Heart right ventricle (tissue), 16 donors: ENCODE measurements at regions of chr12 and their contacts with region 1.

Region 1: GRCh38 chr12:11067514-11067913 is 5.4 kb upstream of the TAS2R46 start:
- DNase-seq: peak in 1 of 2 donors; percentile 68
- ATAC-seq: peak in 6 of 8 donors; percentile 41 to 88 (median 82)
- H3K4me3 ChIP-seq: no peak overlapping the region
- H3K27ac ChIP-seq: no peak overlapping the region
- H3K4me1 ChIP-seq: peaks cover 0 to 10% (median 0%) of the 10 kb centered on the region in 9 donors
- H3K27me3 ChIP-seq: no peaks in the 10 kb centered on the region
- CTCF ChIP-seq: no peak

Region 2: GRCh38 chr12:11015775-11016430 is 51.6 kb before region 1 on chr12:
- intact Hi-C with region 1: loop called in 6 of 10 experiments (anchors 2 to 5 kb)
- DNase-seq: no peak
- ATAC-seq: no peak
- H3K4me3 ChIP-seq: no peak overlapping the region
- H3K27ac ChIP-seq: no peak overlapping the region
- H3K4me1 ChIP-seq: peaks cover 0 to 11% (median 0%) of the 10 kb centered on the region in 9 donors
- H3K27me3 ChIP-seq: no peaks in the 10 kb centered on the region
- CTCF ChIP-seq: no peak

Region 3: GRCh38 chr12:11039171-11039570 is 28.3 kb before region 1 on chr12:
- intact Hi-C with region 1: loop called in 1 of 10 experiments (anchors 2 kb)
- DNase-seq: no peak
- ATAC-seq: no peak
- H3K4me3 ChIP-seq: no peak overlapping the region
- H3K27ac ChIP-seq: no peak overlapping the region
- H3K4me1 ChIP-seq: no peaks in the 10 kb centered on the region
- H3K27me3 ChIP-seq: no peaks in the 10 kb centered on the region
- CTCF ChIP-seq: no peak

Region 4: GRCh38 chr12:11162502-11162901 is 95.0 kb after region 1 on chr12:
- intact Hi-C with region 1: loop called in 1 of 10 experiments (anchors 10 kb)
- DNase-seq: no peak
- ATAC-seq: no peak
- H3K4me3 ChIP-seq: no peak overlapping the region
- H3K27ac ChIP-seq: no peak overlapping the region
- H3K4me1 ChIP-seq: peaks cover 0 to 37% (median 8%) of the 10 kb centered on the region in 9 donors
- H3K27me3 ChIP-seq: no peaks in the 10 kb centered on the region
- CTCF ChIP-seq: no peak